ENCODE measurements at regions of chr6 and their contacts with region 1.

Region 1: DNA sequence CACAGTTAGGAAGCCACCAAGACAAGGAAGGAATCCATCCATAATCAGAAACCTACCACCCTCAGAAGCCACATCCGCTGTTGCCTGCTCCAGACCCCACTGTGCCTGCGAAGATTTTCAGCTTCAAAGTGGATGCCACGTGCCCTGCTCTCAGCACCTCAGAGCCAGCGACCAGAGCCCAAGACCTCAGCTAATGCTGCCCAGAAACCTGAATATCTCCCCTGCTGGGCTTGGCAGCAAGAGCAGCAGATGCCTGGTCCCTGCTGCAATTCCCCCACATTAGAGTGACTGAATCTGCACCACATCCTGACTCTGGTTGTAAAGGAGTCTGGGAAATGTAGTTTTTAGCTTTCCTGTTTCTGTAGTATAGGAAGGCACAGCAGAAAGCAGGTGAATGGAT is 10.7 kb upstream of the ULBP3 start:
- DNase-seq: no peak
- H3K4me3 ChIP-seq: no peak overlapping the region
- H3K27ac ChIP-seq: no peak overlapping the region
- H3K4me1 ChIP-seq: no peaks in the 10 kb centered on the region
- H3K27me3 ChIP-seq: peaks cover 0 to 3% (median under 1%) of the 10 kb centered on the region in 3 donors
- CTCF ChIP-seq: no peak
- EP300 ChIP-seq: no peak
- POLR2A ChIP-seq: no peak

Region 2: DNA sequence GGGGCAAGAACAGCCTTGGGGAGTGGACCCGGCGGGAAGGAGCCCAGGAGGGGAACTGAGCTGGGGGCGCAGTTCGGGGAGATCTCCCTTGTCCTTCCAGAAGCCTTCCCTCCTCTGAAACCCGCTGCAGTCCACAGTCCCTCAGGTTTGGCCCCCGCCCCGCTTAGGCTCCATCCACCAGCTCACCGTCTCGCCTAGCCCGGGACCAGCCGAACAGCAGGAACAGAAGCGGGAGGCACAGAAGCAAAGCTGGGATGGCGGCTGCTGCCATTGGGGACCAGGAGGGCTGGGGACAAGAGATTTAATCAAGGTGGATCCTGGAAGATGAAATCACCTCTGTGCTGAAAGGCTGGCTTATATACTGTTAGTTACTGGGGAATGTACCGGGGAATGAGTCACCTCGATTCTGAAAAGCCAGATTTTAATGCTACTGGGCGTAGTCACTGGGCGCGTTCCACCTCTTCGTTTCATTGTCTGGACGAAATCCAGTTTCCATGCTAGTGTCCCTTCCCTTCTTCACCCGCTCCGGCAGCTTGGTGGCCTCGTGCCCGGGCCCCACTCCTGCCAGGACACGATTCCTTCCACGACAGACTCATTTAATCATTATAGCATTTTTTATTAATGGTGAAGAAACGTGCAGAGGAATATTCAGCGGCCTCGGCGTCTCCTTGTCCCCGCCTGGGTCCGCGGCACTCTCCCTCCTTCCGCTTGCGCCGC is 54.2 kb before region 1 on chr6 and contains the start of gene RAET1L:
- intact Hi-C with region 1: no loop called
- DNase-seq: no peak
- H3K4me3 ChIP-seq: peak within 1 kb of the TSS in 3 of 4 donors; percentile 7 to 42 (median 39)
- H3K27ac ChIP-seq: no peak within 1 kb of the TSS
- H3K4me1 ChIP-seq: peaks cover 0 to 15% (median 14%) of the 10 kb centered on the region in 4 donors
- H3K27me3 ChIP-seq: peaks cover 7 to 41% (median 22%) of the 10 kb centered on the region in 3 donors
- CTCF ChIP-seq: no peak
- EP300 ChIP-seq: no peak
- POLR2A ChIP-seq: no peak
- total RNA-seq, gene RAET1L: not detected

Region 3: DNA sequence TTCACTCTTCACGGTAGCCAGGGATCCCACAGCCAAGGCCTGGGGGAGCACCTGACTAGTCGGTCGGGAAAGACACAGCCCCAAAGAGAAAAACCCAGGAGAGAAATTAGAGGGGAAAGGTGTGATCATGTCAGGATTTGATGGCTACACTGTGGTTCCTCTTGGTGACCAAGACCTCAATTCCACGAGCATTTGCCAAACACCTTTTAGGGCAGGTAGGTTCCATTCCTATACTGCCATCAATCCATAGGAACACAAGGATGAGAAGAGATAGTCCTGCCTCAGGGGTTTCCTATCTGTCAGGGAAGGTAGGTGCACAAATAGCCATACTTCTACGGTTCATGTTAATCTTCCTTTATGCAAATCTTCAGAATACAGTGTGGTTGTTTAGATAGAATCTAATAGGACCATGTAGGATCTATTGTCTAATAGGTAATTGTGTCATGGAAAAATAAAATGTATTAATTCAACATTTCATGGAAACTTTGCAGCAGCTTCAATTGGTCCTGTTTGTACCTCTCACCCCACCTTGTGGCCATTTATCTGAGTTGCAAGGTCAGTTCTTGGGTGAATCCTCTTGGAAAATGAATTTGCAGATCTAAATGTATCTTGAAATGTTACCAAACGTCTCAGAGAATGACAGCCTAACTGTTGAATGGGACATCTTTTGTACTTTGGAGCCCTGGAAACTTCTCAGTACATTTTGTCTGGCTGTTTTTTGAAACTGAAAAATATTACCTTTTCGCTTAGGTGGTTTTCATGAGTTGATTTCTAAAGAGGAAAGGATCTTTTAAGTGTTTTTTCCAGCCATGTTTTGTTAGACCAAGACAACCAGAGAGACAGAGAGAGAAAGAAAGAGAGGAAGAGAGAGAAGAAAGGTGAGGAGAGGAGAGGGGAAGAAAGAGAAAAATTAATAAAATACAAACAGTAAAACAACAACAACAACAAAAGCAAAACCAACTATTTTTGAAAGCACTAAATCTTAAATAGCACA is 255.5 kb after region 1 on chr6:
- intact Hi-C with region 1: loop called (anchors 1 kb)
- DNase-seq: no peak
- H3K4me3 ChIP-seq: no peak overlapping the region
- H3K27ac ChIP-seq: no peak overlapping the region
- H3K4me1 ChIP-seq: no peaks in the 10 kb centered on the region
- H3K27me3 ChIP-seq: no peaks in the 10 kb centered on the region
- CTCF ChIP-seq: peak; percentile 14 to 79 (median 70)
- EP300 ChIP-seq: no peak
- POLR2A ChIP-seq: no peak

Region 4: GRCh38 chr6:150395398-150396009 is 315.9 kb after region 1 on chr6:
- intact Hi-C with region 1: loop called (anchors 2 kb)
- DNase-seq: no peak
- H3K4me3 ChIP-seq: no peak overlapping the region
- H3K27ac ChIP-seq: no peak overlapping the region
- H3K4me1 ChIP-seq: no peaks in the 10 kb centered on the region
- H3K27me3 ChIP-seq: no peaks in the 10 kb centered on the region
- CTCF ChIP-seq: peak in 3 of 4 experiments; percentile 37 to 51 (median 49)
- EP300 ChIP-seq: no peak
- POLR2A ChIP-seq: no peak

Region 5: GRCh38 chr6:150813319-150813992 is 733.9 kb after region 1 on chr6:
- intact Hi-C with region 1: loop called (anchors 5 kb)
- DNase-seq: no peak
- H3K4me3 ChIP-seq: no peak overlapping the region
- H3K27ac ChIP-seq: peak overlapping the region in 3 of 4 donors; percentile 16 to 52 (median 27)
- H3K4me1 ChIP-seq: peaks cover 0 to 22% (median 8%) of the 10 kb centered on the region in 4 donors
- H3K27me3 ChIP-seq: no peaks in the 10 kb centered on the region
- CTCF ChIP-seq: no peak
- EP300 ChIP-seq: no peak
- POLR2A ChIP-seq: no peak